A673 (cell line): ENCODE measurements at regions of chr4 and their contacts with region 1.

Region 1: DNA sequence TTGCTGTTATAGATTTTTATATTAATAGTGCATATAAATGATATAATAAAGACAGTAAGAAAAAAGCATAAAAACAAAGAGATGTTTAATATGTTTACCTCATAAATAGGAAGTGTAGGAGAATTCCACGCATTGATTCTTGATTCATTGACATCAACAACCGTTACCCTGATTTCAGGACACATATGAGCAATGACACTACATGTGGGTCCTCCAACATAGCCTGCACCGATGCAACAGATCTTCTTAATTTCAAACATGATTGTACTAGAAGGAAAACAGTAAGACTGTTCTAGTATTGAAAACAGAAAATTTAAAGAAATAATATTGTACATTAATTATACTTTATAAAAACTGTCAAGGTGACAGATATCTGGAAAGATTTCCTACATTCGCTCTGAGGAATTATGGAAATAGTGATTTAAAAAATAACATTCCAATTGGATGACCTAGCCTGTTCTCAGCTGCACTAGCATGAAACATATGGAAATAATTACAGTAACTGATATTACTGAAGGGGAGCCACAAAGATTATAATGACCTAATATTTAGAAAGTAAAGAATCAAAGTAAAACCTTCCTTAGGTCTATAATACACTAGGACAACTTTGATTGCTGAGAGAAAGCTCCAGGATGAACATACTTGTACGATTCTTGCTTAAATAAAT is 5.9 kb downstream of the UGDH start:
- DNase-seq: peak; percentile 19
- H3K4me3 ChIP-seq: no peak overlapping the region
- H3K27ac ChIP-seq: peak overlapping the region; percentile 47
- H3K4me1 ChIP-seq: peaks cover 15% of the 10 kb centered on the region
- H3K27me3 ChIP-seq: no peaks in the 10 kb centered on the region
- CTCF ChIP-seq: no peak

Region 2: DNA sequence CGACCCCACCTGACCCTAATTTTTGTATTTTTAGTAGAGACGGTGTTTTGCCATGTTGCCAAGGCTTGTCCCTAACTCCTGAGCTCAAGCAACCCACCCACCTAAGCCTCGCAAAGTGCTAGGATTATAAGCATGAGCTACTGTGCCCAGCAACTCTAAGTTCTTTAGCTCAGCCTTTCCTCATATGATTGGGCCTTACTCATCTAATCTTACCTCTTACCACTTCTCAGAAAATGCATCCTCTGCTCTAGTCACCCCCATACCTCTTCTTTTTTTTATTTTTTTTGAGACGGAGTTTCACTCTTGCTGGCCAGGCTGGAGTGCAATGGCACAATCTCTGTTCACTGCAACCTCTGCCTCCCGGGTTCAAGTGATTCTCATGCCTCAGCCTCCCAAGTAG is 41.4 kb after region 1 on chr4:
- CTCF ChIA-PET with region 1: no interaction called
- POLR2A ChIA-PET with region 1: no interaction called
- intact Hi-C with region 1: no loop called
- DNase-seq: no peak
- H3K4me3 ChIP-seq: no peak overlapping the region
- H3K27ac ChIP-seq: no peak overlapping the region
- H3K4me1 ChIP-seq: no peaks in the 10 kb centered on the region
- H3K27me3 ChIP-seq: no peaks in the 10 kb centered on the region
- CTCF ChIP-seq: no peak

Region 3: DNA sequence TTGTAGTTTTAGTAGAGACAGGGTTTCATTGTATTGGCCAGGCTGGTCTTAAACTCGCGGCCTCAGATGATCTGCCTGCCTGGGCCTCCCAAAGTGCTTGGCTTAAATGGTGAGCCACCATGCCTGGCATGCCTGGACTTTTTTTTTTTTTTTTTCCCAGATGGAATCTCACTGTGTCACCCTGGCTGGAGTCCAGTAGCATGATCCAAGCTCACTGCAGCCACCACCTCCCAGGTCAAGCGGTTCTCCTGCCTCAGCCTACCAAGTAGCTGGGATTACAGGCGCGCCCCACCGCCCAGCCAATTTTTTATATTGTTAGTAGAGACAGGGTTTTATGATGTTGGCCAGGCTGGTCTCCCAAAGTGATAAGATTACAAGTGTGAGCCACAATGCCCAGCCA is 184.9 kb after region 1 on chr4:
- CTCF ChIA-PET with region 1: no interaction called
- POLR2A ChIA-PET with region 1: interaction called, 14 read pairs
- intact Hi-C with region 1: no loop called
- DNase-seq: no peak
- H3K4me3 ChIP-seq: no peak overlapping the region
- H3K27ac ChIP-seq: no peak overlapping the region
- H3K4me1 ChIP-seq: peaks cover 27% of the 10 kb centered on the region
- H3K27me3 ChIP-seq: no peaks in the 10 kb centered on the region
- CTCF ChIP-seq: no peak

Region 4: DNA sequence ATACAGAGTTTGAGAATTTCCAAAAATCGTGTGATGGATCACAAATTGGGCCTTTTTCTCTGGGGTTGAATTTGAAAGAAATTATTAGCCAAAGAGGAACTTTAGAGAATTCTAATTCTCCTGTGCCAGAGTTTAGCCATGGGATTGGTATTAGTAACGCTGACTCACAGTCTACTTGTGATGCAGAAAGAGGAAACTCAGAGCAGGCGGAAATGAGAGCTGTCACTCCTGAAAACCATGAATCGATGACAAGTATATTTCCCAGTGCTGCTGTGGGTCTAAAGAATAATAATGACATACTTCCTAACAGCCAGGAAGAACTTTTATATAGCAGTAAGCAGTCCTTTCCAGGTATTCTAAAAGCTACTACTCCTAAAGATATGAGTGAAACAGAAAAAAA is 600.1 kb after region 1 on chr4:
- CTCF ChIA-PET with region 1: no interaction called
- POLR2A ChIA-PET with region 1: no interaction called
- intact Hi-C with region 1: no loop called
- DNase-seq: peak; percentile 82
- H3K4me3 ChIP-seq: no peak overlapping the region
- H3K27ac ChIP-seq: peak overlapping the region; percentile 75
- H3K4me1 ChIP-seq: peaks cover 30% of the 10 kb centered on the region
- H3K27me3 ChIP-seq: no peaks in the 10 kb centered on the region
- CTCF ChIP-seq: no peak